ENCODE measurements at regions of chr1 and their contacts with region 1.

Region 1: DNA sequence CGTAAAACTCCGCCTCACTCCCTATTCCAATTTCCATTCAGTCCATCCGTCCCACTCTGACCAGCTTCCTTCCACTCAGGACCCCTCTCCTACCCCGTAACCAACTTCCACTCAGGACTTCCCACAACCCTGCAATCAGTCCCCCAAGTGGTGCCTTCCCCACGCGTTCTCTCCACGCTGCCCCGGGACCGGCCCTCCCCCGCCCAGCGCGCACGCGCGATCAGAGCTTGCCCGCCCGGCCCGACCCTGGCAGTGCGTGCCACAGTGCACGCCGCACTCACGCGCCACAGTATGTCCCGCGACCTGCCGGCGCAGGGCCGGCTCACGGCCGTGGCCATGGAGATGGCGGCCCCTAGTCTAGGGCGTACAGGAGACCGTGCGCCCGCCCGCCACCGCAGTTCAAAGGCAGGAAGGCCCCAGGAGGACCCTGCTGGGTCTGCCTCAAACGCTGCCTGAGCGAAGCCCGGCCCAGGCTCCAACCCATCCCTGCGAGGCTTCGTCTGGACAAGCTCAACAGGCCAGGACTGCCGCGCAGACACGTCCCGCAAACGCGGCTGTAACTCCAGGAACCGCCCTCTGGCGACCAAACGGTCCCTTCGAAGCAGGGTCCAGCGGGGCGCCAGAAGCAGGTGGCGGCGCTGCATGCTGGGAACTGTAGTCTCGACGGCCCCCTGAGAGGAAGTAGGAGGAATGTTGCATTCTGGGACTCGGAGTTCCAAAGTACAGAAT is at the start of gene NDC1:
- DNase-seq: peak; percentile 79 to 95 (median 91)
- H3K4me3 ChIP-seq: peak within 1 kb of the TSS; percentile 67 to 97 (median 84)
- H3K27ac ChIP-seq: peak within 1 kb of the TSS; percentile 86 to 100 (median 99)
- H3K27me3 ChIP-seq: no peaks in the 10 kb centered on the region
- CTCF ChIP-seq: peak in 52 of 56 donors; percentile 22 to 73 (median 52)
- total RNA-seq, gene NDC1: 5.4 to 15.8 (median 10.1) TPM

Region 2: DNA sequence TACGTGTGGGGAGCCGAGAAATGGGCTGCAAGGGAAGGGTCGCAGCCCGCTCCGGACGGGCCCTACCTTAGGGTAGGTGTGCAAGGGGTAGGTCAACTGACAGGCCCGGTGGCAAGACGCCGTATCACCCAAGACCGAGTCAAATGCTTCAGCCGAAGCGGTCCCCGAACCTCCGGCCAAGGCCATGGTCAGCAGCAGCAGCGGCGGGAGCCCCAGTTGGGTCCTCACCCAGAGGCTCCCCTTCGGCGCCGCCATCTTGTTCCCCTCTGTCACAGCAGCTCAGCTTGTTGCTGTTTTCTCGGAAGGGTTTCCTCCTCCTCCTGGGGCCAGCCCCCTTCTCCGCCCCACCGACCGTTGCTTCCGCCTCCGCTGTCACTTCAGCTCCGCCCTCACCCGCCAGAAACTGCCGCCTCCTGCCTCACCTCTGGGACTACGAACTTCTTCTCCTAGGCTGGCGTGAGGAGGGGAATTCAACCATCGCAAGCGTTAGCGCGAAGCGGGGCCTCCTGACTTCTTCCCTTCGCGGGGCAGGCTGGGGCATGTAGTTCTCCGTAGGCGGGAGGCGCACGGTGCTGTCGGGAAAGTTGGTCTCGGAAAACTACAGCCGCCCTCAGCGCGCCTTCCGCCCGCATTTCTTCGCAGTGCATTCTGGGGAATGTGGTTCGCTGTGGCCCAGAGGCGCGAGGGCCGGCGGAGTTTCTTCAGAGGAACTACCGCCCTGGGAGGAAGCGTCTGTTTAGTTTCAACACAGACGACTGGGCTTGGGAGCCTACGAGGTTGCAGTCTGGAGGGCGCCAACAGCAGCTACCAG is 215.1 kb after region 1 on chr1 and contains the starts of genes TCEANC2 and TMEM59:
- intact Hi-C with region 1: loop called (anchors 1 to 2 kb)
- DNase-seq: peak; percentile 94 to 99 (median 98)
- H3K4me3 ChIP-seq: peak within 1 kb of the TSS; percentile 71 to 100 (median 95)
- H3K27ac ChIP-seq: peak within 1 kb of the TSS; percentile 82 to 99 (median 96)
- H3K27me3 ChIP-seq: no peaks in the 10 kb centered on the region
- CTCF ChIP-seq: peak in 30 of 56 donors; percentile 4 to 57 (median 29)
- total RNA-seq, gene TCEANC2: 5.2 to 16.1 (median 8.6) TPM
- total RNA-seq, gene TMEM59: 155 to 435 (median 269) TPM

Region 3: DNA sequence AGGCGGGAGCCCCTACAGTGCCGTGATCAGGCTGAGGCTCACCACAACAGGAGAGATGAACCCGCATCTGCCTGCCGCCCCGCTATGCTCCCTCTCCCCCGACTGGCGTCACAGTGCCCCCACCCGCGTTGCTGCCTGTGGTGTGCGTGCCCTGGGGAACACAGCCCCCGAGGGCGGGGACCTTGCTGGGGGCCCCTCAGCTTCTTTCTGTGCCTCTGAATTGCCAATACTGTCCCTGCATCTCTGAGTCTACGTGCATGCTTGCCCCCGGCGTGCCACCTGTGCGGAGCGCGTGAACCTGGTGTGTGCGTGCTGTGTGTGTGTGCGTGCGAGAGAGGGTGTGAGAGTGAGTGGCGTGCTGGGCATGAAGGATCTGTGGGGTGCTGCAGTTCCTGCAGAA is 916.0 kb after region 1 on chr1:
- intact Hi-C with region 1: no loop called
- DNase-seq: no peak
- H3K4me3 ChIP-seq: no peak overlapping the region
- H3K27ac ChIP-seq: no peak overlapping the region
- H3K27me3 ChIP-seq: no peaks in the 10 kb centered on the region
- CTCF ChIP-seq: no peak